H1 (cell line): ENCODE measurements at regions of chr9 and their contacts with region 1.

Region 1: GRCh38 chr9:131885144-131885609 is 145.3 kb upstream of the RAPGEF1 start:
- DNase-seq: no peak
- H3K4me3 ChIP-seq: no peak overlapping the region
- H3K27ac ChIP-seq: no peak overlapping the region
- H3K4me1 ChIP-seq: peaks cover 2 to 26% (median 21%) of the 10 kb centered on the region in 4 experiments
- H3K27me3 ChIP-seq: no peaks in the 10 kb centered on the region
- CTCF ChIP-seq: no peak
- EP300 ChIP-seq: no peak
- POLR2A ChIP-seq: no peak
- RAD21 ChIP-seq: no peak

Region 2: GRCh38 chr9:131860430-131860829 is 24.7 kb before region 1 on chr9:
- CTCF ChIA-PET with region 1: no interaction called
- POLR2A ChIA-PET with region 1: no interaction called
- DNase-seq: no peak
- H3K4me3 ChIP-seq: no peak overlapping the region
- H3K27ac ChIP-seq: no peak overlapping the region
- H3K4me1 ChIP-seq: peaks cover 0 to 6% (median 2%) of the 10 kb centered on the region in 4 experiments; a peak in 3 of 7 replicates
- H3K27me3 ChIP-seq: no peaks in the 10 kb centered on the region
- CTCF ChIP-seq: no peak
- EP300 ChIP-seq: no peak
- POLR2A ChIP-seq: no peak
- RAD21 ChIP-seq: no peak

Region 3: GRCh38 chr9:131872006-131872405 is 13.2 kb before region 1 on chr9:
- CTCF ChIA-PET with region 1: interaction called, 25 read pairs
- POLR2A ChIA-PET with region 1: no interaction called
- DNase-seq: no peak
- H3K4me3 ChIP-seq: no peak overlapping the region
- H3K27ac ChIP-seq: no peak overlapping the region
- H3K4me1 ChIP-seq: peaks cover 6 to 12% (median 10%) of the 10 kb centered on the region in 4 experiments; a peak in 6 of 7 replicates
- H3K27me3 ChIP-seq: no peaks in the 10 kb centered on the region; a peak in 1 of 7 replicates
- CTCF ChIP-seq: peak; percentile 81 to 91 (median 89)
- EP300 ChIP-seq: no peak
- POLR2A ChIP-seq: no peak
- RAD21 ChIP-seq: peak; percentile 67 to 77